ENCODE measurements at regions of chr13 and their contacts with region 1.

Region 1: DNA sequence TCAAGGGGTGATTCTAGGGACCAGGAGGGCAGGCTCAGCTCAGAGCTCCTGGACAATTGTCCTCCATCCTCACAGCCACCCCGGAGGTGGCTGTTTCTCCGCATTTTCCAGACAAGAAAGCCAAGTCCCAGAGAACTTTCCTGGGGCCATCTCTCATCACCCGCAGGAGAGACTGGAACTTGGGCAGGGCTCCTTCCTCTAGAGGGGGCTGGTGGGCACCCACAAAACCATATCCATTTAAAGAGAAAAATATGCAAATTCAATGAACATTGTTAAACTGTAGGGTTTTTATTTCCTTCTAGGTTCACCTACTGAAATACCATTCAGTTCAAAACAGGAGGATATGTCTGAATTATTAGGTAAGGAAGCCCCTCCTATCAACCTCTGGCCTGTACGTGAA is 16.6 kb downstream of the SPACA7 start:
- DNase-seq: no peak
- ATAC-seq: no peak
- H3K4me3 ChIP-seq: no peak overlapping the region
- H3K27ac ChIP-seq: no peak overlapping the region
- H3K4me1 ChIP-seq: no peaks in the 10 kb centered on the region
- H3K27me3 ChIP-seq: no peaks in the 10 kb centered on the region
- CTCF ChIP-seq: no peak
- POLR2A ChIP-seq: no peak

Region 2: GRCh38 chr13:110957181-110957884 is 1435.4 kb before region 1 on chr13:
- intact Hi-C with region 1: loop called (anchors 10 kb)
- DNase-seq: no peak
- ATAC-seq: no peak
- H3K4me3 ChIP-seq: no peak overlapping the region
- H3K27ac ChIP-seq: no peak overlapping the region
- H3K4me1 ChIP-seq: no peaks in the 10 kb centered on the region
- H3K27me3 ChIP-seq: no peaks in the 10 kb centered on the region
- CTCF ChIP-seq: no peak
- POLR2A ChIP-seq: no peak

Region 3: DNA sequence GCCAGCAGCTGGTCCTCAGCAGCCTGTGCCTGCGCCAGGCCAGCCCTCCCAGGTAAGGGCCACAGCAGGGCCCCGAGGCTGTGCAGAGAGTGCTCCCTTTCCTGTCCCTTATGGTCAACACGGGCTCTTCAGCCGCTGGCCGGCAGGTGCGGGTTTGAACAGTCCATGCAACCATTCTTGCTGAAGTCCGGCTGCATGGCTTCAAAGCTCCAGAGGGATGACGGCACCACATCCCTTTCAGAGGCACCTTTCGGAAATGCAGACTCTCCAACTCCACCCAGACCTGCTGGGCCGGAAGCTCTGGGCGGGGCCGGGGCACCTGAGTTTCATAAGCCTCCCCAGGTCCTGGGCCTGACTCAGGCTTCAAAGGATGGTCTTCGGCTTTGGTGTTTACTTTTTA is 64.8 kb after region 1 on chr13:
- intact Hi-C with region 1: no loop called
- DNase-seq: no peak
- ATAC-seq: no peak
- H3K4me3 ChIP-seq: no peak overlapping the region
- H3K27ac ChIP-seq: no peak overlapping the region
- H3K4me1 ChIP-seq: no peaks in the 10 kb centered on the region
- H3K27me3 ChIP-seq: no peaks in the 10 kb centered on the region
- CTCF ChIP-seq: no peak
- POLR2A ChIP-seq: no peak